ENCODE measurements at regions of chr5 and their contacts with region 1.

Region 1: DNA sequence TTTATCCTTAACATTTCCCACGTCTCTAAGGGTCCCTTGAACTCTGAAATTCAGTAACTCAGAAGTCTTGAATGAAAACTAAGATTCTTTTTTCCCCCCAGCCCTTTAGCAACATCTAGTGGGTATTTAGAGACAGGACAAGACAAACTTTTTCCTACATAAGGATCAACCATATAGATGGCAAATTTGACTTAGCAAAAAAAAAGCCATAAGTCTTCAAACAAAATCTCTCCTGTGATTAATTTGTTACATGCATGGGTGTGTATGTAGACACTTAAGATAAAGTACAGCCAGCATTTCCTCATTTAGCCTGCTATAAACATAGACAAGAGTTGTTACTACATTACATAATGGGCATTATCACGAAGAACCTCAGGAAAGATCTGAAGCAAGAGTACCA is 29.1 kb upstream of the ANKRD31 start:
- DNase-seq: peak; percentile 40
- ATAC-seq: peak; percentile 31; the same call in 1 of the 3 replicates
- H3K4me3 ChIP-seq: no peak overlapping the region
- H3K27ac ChIP-seq: no peak overlapping the region
- H3K4me1 ChIP-seq: peaks cover 25% of the 10 kb centered on the region
- H3K27me3 ChIP-seq: no peaks in the 10 kb centered on the region
- CTCF ChIP-seq: peak; percentile 68
- EP300 ChIP-seq: no peak
- POLR2A ChIP-seq: no peak
- RAD21 ChIP-seq: peak; percentile 69

Region 2: DNA sequence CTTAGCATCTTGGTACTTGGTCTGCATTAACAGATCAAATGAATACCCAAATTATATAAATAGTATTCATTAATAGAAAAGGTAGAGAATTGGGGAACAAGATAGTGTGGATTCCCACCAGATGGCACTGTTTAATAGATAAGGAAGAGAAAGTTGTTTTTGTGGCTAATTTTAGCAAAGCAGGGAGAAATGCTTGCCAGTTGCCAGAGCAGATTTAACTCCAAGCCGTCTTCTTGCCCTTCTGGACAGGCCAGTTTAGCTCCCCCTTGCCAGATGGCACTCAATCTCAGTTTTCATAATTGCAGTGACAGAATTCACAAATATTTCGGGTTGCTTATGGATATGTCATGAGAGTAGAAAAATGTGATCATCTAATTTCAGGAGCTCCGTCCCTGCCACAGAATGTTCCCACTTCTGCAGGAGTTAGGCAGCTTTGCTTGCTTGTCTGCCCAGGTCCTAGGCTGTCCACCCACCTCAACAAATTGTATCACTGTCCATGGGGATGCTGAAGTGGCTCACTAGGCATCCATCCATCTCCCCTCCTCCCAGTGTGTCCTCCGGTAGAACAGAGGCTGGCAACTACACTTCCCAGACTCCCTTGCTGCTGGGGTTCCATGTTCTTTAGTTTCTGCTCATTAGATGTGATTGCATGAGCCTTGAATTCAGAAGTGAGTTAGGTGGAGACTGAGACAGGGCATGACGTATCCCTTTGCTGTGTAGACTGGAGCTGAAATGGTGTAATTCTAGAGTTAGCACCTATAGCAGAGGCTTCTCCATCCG is 592.5 kb before region 1 on chr5:
- CTCF ChIA-PET with region 1: interaction called, 5 read pairs
- POLR2A ChIA-PET with region 1: no interaction called
- in situ Hi-C with region 1: no loop called
- intact Hi-C with region 1: loop called (anchors 5 kb)
- DNase-seq: peak; percentile 29
- ATAC-seq: peak; percentile 47
- H3K4me3 ChIP-seq: no peak overlapping the region
- H3K27ac ChIP-seq: no peak overlapping the region
- H3K4me1 ChIP-seq: peaks cover 52% of the 10 kb centered on the region
- H3K27me3 ChIP-seq: no peaks in the 10 kb centered on the region
- CTCF ChIP-seq: peak; percentile 58
- EP300 ChIP-seq: no peak
- POLR2A ChIP-seq: no peak
- RAD21 ChIP-seq: peak; percentile 45; the same call in 1 of the 2 replicates

Region 3: GRCh38 chr5:74919487-74919886 is 346.2 kb before region 1 on chr5:
- CTCF ChIA-PET with region 1: no interaction called
- POLR2A ChIA-PET with region 1: interaction called, 4 read pairs
- in situ Hi-C with region 1: no loop called
- intact Hi-C with region 1: loop called (anchors 5 kb)
- DNase-seq: peak; percentile 60
- ATAC-seq: no peak
- H3K4me3 ChIP-seq: no peak overlapping the region
- H3K27ac ChIP-seq: no peak overlapping the region
- H3K4me1 ChIP-seq: peaks cover 51% of the 10 kb centered on the region
- H3K27me3 ChIP-seq: no peaks in the 10 kb centered on the region
- CTCF ChIP-seq: peak; percentile 75
- EP300 ChIP-seq: no peak
- POLR2A ChIP-seq: no peak
- RAD21 ChIP-seq: 0 out of 2 replicates have a peak, but pooled peaks have one; percentile 59

Region 4: GRCh38 chr5:74934949-74935751 is 330.6 kb before region 1 on chr5:
- CTCF ChIA-PET with region 1: no interaction called
- POLR2A ChIA-PET with region 1: no interaction called
- in situ Hi-C with region 1: loop called (anchors 10 kb)
- intact Hi-C with region 1: no loop called
- DNase-seq: peak; percentile 46
- ATAC-seq: peak; percentile 72
- H3K4me3 ChIP-seq: no peak overlapping the region; a peak in 1 of 6 replicates
- H3K27ac ChIP-seq: no peak overlapping the region
- H3K4me1 ChIP-seq: peaks cover 12% of the 10 kb centered on the region
- H3K27me3 ChIP-seq: 0 out of 5 replicates have a peak, but pooled peaks cover 0 to 7% of the 10 kb centered on the region in 2 experiments
- CTCF ChIP-seq: peak; percentile 54
- EP300 ChIP-seq: no peak
- POLR2A ChIP-seq: no peak
- RAD21 ChIP-seq: 0 out of 2 replicates have a peak, but pooled peaks have one; percentile 27

Region 5: GRCh38 chr5:75053304-75054133 is 212.2 kb before region 1 on chr5:
- CTCF ChIA-PET with region 1: interaction called, 10 read pairs
- POLR2A ChIA-PET with region 1: no interaction called
- in situ Hi-C with region 1: loop called (anchors 10 kb)
- intact Hi-C with region 1: loop called (anchors 1 kb)
- DNase-seq: peak; percentile 16
- ATAC-seq: peak; percentile 75
- H3K4me3 ChIP-seq: peak overlapping the region; percentile 54 to 75 (median 68)
- H3K27ac ChIP-seq: no peak overlapping the region
- H3K4me1 ChIP-seq: peaks cover 27% of the 10 kb centered on the region
- H3K27me3 ChIP-seq: peaks cover 19 to 53% of the 10 kb centered on the region in 2 experiments
- CTCF ChIP-seq: peak; percentile 44
- EP300 ChIP-seq: no peak
- POLR2A ChIP-seq: no peak
- RAD21 ChIP-seq: peak; percentile 27; the same call in 1 of the 2 replicates

Region 6: GRCh38 chr5:75156585-75156984 is 109.1 kb before region 1 on chr5:
- CTCF ChIA-PET with region 1: no interaction called
- POLR2A ChIA-PET with region 1: no interaction called
- in situ Hi-C with region 1: no loop called
- intact Hi-C with region 1: loop called (anchors 2 kb)
- DNase-seq: peak; percentile 15
- ATAC-seq: peak; percentile 69
- H3K4me3 ChIP-seq: no peak overlapping the region
- H3K27ac ChIP-seq: no peak overlapping the region
- H3K4me1 ChIP-seq: no peaks in the 10 kb centered on the region
- H3K27me3 ChIP-seq: no peaks in the 10 kb centered on the region
- CTCF ChIP-seq: peak; percentile 58
- EP300 ChIP-seq: no peak
- POLR2A ChIP-seq: no peak
- RAD21 ChIP-seq: 0 out of 2 replicates have a peak, but pooled peaks have one; percentile 30

Region 7: GRCh38 chr5:75236322-75237316 is 29.1 kb before region 1 on chr5 and contains the start of gene ANKRD31:
- CTCF ChIA-PET with region 1: interaction called, 7 read pairs
- POLR2A ChIA-PET with region 1: interaction called, 22 read pairs
- in situ Hi-C with region 1: no loop called
- intact Hi-C with region 1: loop called (anchors 1 kb)
- DNase-seq: peak; percentile 43
- ATAC-seq: peak; percentile 98
- H3K4me3 ChIP-seq: peak within 1 kb of the TSS; percentile 72 to 93 (median 91)
- H3K27ac ChIP-seq: peak within 1 kb of the TSS; percentile 45
- H3K4me1 ChIP-seq: peaks cover 12% of the 10 kb centered on the region
- H3K27me3 ChIP-seq: no peaks in the 10 kb centered on the region
- CTCF ChIP-seq: peak; percentile 71
- EP300 ChIP-seq: 0 out of 4 replicates have a peak, but pooled peaks have one; percentile 9
- POLR2A ChIP-seq: peak; percentile 57 to 75
- RAD21 ChIP-seq: peak; percentile 97
- total RNA-seq, gene ANKRD31: 0.08 and 0.09 TPM in 2 replicates

Region 8: GRCh38 chr5:75373862-75374261 is 108.1 kb after region 1 on chr5:
- CTCF ChIA-PET with region 1: no interaction called
- POLR2A ChIA-PET with region 1: no interaction called
- in situ Hi-C with region 1: no loop called
- intact Hi-C with region 1: no loop called
- DNase-seq: peak; percentile 39
- ATAC-seq: peak; percentile 63
- H3K4me3 ChIP-seq: no peak overlapping the region
- H3K27ac ChIP-seq: peak overlapping the region; percentile 68
- H3K4me1 ChIP-seq: peaks cover 16% of the 10 kb centered on the region
- H3K27me3 ChIP-seq: no peaks in the 10 kb centered on the region
- CTCF ChIP-seq: no peak
- EP300 ChIP-seq: no peak
- POLR2A ChIP-seq: no peak
- RAD21 ChIP-seq: no peak